Mammary epithelial cell (primary cell): ENCODE measurements at regions of chr14 and their contacts with region 1.

Region 1: DNA sequence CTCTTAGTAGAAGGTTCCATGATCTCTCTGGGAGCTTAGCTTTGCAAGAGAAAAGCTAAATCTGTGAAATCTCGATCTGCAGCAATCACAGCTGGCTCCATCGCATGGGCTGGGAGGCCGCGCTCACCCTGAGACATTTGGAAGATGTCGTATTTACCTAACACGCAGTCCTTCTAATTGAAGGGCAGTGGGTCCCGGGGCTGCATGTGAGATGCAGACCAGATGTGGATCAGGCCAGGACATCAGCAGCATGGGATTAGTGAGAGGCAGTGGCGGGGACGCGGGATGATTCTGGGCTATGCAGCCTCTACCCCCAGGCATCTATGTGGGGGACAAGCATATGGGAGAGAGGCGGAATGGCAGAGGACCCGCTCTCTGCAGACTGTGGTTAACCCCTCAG is 312.4 kb upstream of the RTL1 start:
- DNase-seq: no peak
- H3K4me3 ChIP-seq: no peak overlapping the region
- H3K27ac ChIP-seq: no peak overlapping the region
- H3K4me1 ChIP-seq: no peaks in the 10 kb centered on the region
- H3K27me3 ChIP-seq: no peaks in the 10 kb centered on the region
- CTCF ChIP-seq: no peak

Region 2: DNA sequence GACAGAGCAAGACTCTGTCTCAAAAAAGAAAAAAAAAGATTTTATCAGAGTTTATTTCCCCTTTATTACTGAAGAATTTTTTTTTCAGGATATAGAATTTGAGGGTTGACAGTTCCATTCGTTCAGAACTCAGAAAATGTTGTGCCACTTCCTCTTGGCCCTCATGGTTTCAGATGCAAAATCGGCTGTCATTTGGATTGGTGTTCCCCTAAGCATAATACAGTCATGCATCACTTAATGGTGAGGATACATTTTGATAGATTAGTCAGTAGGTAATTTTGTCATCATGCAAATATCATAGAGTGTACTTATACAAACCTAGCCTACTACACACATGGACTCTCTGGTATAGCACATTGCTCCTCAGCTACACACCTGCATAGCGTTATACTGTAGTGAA is 48.5 kb before region 1 on chr14:
- CTCF ChIA-PET with region 1: no interaction called
- dilution Hi-C with region 1: loop called (anchors 5 kb)
- in situ Hi-C with region 1: no loop called
- intact Hi-C with region 1: no loop called
- DNase-seq: no peak
- H3K4me3 ChIP-seq: no peak overlapping the region
- H3K27ac ChIP-seq: no peak overlapping the region
- H3K4me1 ChIP-seq: no peaks in the 10 kb centered on the region
- H3K27me3 ChIP-seq: no peaks in the 10 kb centered on the region
- CTCF ChIP-seq: no peak

Region 3: GRCh38 chr14:101301011-101301410 is 85.1 kb after region 1 on chr14:
- CTCF ChIA-PET with region 1: no interaction called
- dilution Hi-C with region 1: loop called (anchors 10 kb)
- in situ Hi-C with region 1: no loop called
- intact Hi-C with region 1: no loop called
- DNase-seq: no peak
- H3K4me3 ChIP-seq: no peak overlapping the region
- H3K27ac ChIP-seq: no peak overlapping the region
- H3K4me1 ChIP-seq: no peaks in the 10 kb centered on the region
- H3K27me3 ChIP-seq: no peaks in the 10 kb centered on the region
- CTCF ChIP-seq: no peak